ENCODE measurements at regions of chr17 and their contacts with region 1.

Region 1: DNA sequence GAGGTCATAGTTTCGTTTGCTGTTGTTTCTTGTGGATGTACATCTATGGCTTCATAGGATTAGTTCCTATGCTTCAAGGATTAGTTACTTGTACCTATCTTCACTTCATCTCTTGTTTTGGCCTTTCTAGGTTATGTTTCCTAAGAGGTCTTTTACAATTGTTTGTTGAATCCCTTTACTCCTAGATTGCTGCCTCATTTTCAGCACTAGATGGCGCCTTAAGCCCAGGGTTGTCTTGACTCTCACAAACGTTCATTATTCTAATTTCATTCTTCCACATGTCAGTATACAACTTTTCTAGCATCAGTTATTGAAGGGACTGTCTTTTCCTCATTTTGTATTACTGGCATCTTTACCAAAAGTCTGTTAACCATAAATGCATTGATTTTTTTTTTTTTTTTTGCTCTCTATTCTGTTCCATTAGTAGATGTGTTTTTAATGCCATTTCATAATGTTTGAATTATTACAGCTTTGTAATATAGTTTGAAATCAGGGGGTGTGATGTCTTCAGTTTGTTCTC is 45.0 kb upstream of the NACA2 start:
- DNase-seq: peak; percentile 35
- H3K4me3 ChIP-seq: no peak overlapping the region
- H3K27ac ChIP-seq: no peak overlapping the region
- H3K4me1 ChIP-seq: no peaks in the 10 kb centered on the region
- H3K27me3 ChIP-seq: no peaks in the 10 kb centered on the region
- CTCF ChIP-seq: peak; percentile 74 to 81

Region 2: GRCh38 chr17:61837175-61838051 is 201.4 kb after region 1 on chr17:
- CTCF ChIA-PET with region 1: interaction called, 9 read pairs
- dilution Hi-C with region 1: no loop called
- in situ Hi-C with region 1: loop called (anchors 5 kb)
- intact Hi-C with region 1: loop called (anchors 1 kb)
- DNase-seq: peak; percentile 37
- H3K4me3 ChIP-seq: no peak overlapping the region
- H3K27ac ChIP-seq: no peak overlapping the region
- H3K4me1 ChIP-seq: peaks cover 17% of the 10 kb centered on the region
- H3K27me3 ChIP-seq: no peaks in the 10 kb centered on the region
- CTCF ChIP-seq: peak; percentile 70 to 83

Region 3: DNA sequence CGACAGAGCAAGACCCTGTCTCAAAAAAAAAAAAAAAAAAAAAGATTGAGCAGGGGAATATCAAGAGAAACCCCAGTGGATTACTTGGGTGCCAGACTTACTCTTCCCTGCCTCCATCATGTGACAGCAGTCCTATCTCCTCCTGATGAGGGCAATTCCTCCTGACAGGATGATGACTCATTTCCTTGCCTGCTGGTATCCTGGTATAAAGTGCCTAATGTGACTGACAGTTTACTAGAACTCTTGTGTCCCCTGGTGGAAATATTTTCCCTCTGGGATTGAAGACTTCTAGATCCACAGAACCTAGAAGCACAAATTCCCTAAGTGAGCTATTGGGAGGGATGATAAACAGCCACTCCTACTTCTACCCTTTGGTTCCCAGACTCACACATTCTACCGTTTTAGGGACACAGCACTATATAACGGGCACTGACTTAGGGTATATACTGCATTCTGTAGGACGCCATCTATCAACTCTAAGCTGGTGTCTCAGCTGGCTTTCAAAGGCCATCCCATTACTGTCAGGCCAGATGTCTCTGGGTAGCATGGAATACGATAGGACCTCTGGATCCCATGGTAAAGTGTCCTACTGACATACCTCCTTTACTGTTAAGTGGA is 543.7 kb after region 1 on chr17:
- CTCF ChIA-PET with region 1: no interaction called
- dilution Hi-C with region 1: no loop called
- in situ Hi-C with region 1: no loop called
- intact Hi-C with region 1: loop called (anchors 5 kb)
- DNase-seq: peak; percentile 92
- H3K4me3 ChIP-seq: no peak overlapping the region
- H3K27ac ChIP-seq: no peak overlapping the region
- H3K4me1 ChIP-seq: peaks cover 19% of the 10 kb centered on the region
- H3K27me3 ChIP-seq: no peaks in the 10 kb centered on the region
- CTCF ChIP-seq: peak; percentile 41 to 56

Measured in mammary epithelial cell (primary cell).